Ascending aorta (tissue), 2 donors: ENCODE measurements at regions of chr2 and their contacts with region 1.

Region 1: GRCh38 chr2:217691920-217692666 is 310.7 kb downstream of the TNS1 start:
- DNase-seq: peak; percentile 59 to 95
- H3K4me3 ChIP-seq: no peak overlapping the region
- H3K27ac ChIP-seq: peak overlapping the region; percentile 58 to 77
- H3K4me1 ChIP-seq: peaks cover 9 to 43% of the 10 kb centered on the region in 2 donors
- H3K27me3 ChIP-seq: no peaks in the 10 kb centered on the region
- CTCF ChIP-seq: no peak

Region 2: GRCh38 chr2:217666338-217666737 is 25.8 kb before region 1 on chr2:
- intact Hi-C with region 1: loop called (anchors 2 kb)
- DNase-seq: no peak
- H3K4me3 ChIP-seq: no peak overlapping the region
- H3K27ac ChIP-seq: peak overlapping the region; percentile 78 to 81
- H3K4me1 ChIP-seq: peaks cover 15 to 67% of the 10 kb centered on the region in 2 donors
- H3K27me3 ChIP-seq: no peaks in the 10 kb centered on the region
- CTCF ChIP-seq: no peak

Region 3: DNA sequence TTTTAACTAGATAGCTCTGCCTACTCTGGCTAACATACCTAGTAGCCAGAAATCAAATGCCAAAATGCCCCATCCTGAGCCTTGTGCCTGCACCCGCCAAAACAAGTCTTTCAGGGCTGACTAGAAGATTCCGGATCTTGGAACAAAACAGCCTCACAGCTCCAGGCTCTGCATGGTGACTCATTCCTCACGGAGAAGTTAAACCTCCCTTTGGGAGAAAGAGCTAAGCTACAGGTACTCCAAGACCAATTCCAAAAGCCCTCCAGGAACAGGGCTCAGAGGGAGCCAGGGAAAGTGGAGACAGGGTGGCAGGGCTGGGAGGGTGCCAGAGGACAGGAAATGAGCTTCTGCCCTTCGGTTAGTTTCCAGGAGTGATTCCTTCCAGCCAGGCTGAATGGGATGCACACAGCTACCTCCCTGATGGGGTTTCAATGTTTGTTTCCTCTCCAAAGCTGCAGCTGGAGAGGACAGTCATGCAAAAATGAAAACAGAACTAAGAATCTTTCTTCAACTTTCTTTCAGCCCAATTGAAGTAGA is 15.1 kb after region 1 on chr2:
- intact Hi-C with region 1: loop called (anchors 2 kb)
- DNase-seq: peak in 1 of 2 donors; percentile 72
- H3K4me3 ChIP-seq: no peak overlapping the region
- H3K27ac ChIP-seq: peak overlapping the region; percentile 28 to 71
- H3K4me1 ChIP-seq: peaks cover 5 to 14% of the 10 kb centered on the region in 2 donors
- H3K27me3 ChIP-seq: no peaks in the 10 kb centered on the region
- CTCF ChIP-seq: no peak